ENCODE measurements at regions of chr17 and their contacts with region 1.

Region 1: GRCh38 chr17:81020767-81021497 is 14.0 kb upstream of the BAIAP2 start:
- DNase-seq: peak; percentile 80
- H3K4me3 ChIP-seq: peak overlapping the region in 1 of 4 donors; percentile 10
- H3K27ac ChIP-seq: peak overlapping the region; percentile 79 to 86 (median 81)
- H3K4me1 ChIP-seq: peaks cover 15 to 56% (median 41%) of the 10 kb centered on the region in 4 donors
- H3K27me3 ChIP-seq: peaks cover 3% of the 10 kb centered on the region
- CTCF ChIP-seq: no peak
- EP300 ChIP-seq: no peak
- POLR2A ChIP-seq: peak; percentile 58

Region 2: DNA sequence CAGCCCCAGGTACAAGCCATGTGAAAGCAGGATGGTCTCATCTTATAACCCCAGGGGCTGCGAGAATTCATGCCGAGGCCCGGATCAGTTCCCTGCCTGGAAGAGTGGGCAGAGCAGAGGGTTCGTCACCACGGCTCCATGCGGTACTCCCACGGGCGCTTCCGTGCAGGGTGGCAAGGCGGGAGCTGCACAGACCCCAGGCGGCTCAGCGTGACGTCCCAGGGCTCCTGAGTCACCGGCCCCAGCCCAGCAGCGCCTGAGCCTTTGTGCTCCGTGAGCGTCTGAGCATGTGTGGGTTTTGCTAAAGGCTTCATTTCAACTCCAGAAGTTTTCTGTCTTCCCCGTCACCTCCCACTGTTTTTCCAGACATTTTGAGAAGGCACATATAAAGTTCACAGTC is 100.5 kb before region 1 on chr17:
- in situ Hi-C with region 1: no loop called
- intact Hi-C with region 1: no loop called
- DNase-seq: no peak
- H3K4me3 ChIP-seq: no peak overlapping the region
- H3K27ac ChIP-seq: no peak overlapping the region
- H3K4me1 ChIP-seq: no peaks in the 10 kb centered on the region
- H3K27me3 ChIP-seq: no peaks in the 10 kb centered on the region
- CTCF ChIP-seq: no peak
- EP300 ChIP-seq: no peak
- POLR2A ChIP-seq: no peak

Region 3: GRCh38 chr17:80991645-80992076 is 29.3 kb before region 1 on chr17 and contains the start of gene CHMP6:
- in situ Hi-C with region 1: no loop called
- intact Hi-C with region 1: no loop called
- DNase-seq: peak; percentile 76
- H3K4me3 ChIP-seq: peak within 1 kb of the TSS; percentile 75 to 100 (median 99)
- H3K27ac ChIP-seq: peak within 1 kb of the TSS; percentile 61 to 92 (median 90)
- H3K4me1 ChIP-seq: peaks cover 13 to 43% (median 30%) of the 10 kb centered on the region in 4 donors
- H3K27me3 ChIP-seq: no peaks in the 10 kb centered on the region
- CTCF ChIP-seq: peak in 1 of 5 experiments; percentile 35
- EP300 ChIP-seq: no peak
- POLR2A ChIP-seq: no peak
- total RNA-seq, gene CHMP6: 38.6 to 107 (median 41.7) TPM

Region 4: GRCh38 chr17:81083125-81083765 is 62.3 kb after region 1 on chr17:
- in situ Hi-C with region 1: no loop called
- intact Hi-C with region 1: no loop called
- DNase-seq: no peak
- H3K4me3 ChIP-seq: no peak overlapping the region
- H3K27ac ChIP-seq: peak overlapping the region in 2 of 4 donors; percentile 16 to 17
- H3K4me1 ChIP-seq: peaks cover 0 to 11% (median 7%) of the 10 kb centered on the region in 4 donors
- H3K27me3 ChIP-seq: no peaks in the 10 kb centered on the region
- CTCF ChIP-seq: no peak
- EP300 ChIP-seq: no peak
- POLR2A ChIP-seq: no peak

Region 5: GRCh38 chr17:81094509-81095382 is 73.8 kb after region 1 on chr17:
- in situ Hi-C with region 1: loop called in 2 of 4 experiments (anchors 10 kb)
- intact Hi-C with region 1: loop called (anchors 5 kb)
- DNase-seq: peak; percentile 72
- H3K4me3 ChIP-seq: no peak overlapping the region
- H3K27ac ChIP-seq: peak overlapping the region; percentile 70 to 76 (median 75)
- H3K4me1 ChIP-seq: peaks cover 22 to 52% (median 45%) of the 10 kb centered on the region in 4 donors
- H3K27me3 ChIP-seq: no peaks in the 10 kb centered on the region
- CTCF ChIP-seq: no peak
- EP300 ChIP-seq: no peak
- POLR2A ChIP-seq: no peak